Tibial artery (tissue), 4 donors: ENCODE measurements at regions of chr14 and their contacts with region 1.

Region 1: DNA sequence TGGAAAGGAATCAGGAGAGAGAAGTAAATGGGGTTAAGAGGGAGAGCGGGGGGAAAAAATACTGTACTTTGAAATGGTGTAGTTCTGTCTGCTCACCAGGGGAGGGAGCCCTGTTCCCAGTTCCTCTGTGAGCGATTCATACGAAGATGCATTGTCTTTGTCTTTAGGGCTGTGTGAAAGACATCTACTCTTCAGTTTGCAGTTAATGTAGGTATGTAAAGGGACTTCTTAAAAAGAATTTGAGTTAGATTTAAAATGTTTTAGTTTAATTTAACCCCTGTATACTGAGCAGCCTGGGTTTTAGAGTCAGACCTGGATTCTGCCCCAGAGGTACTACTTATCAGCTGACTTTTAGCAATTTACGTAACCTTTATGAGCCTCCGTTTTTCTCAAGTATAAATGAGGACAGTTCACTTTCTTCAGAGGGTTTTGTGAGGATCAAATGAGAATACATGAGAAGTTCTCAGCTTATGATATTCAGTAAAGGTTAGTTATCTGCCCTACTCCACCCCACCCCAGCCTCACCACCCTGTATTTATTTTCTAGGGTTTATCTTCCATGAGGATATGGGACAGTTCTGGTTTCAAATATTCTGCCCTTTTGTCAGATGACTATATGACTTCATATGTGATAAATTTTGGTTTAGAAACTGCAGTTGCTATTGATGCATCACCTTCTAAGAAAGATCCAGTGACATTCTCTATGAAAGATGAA is 82.5 kb upstream of the EVL start:
- DNase-seq: no peak
- H3K4me3 ChIP-seq: no peak overlapping the region
- H3K27ac ChIP-seq: no peak overlapping the region
- H3K4me1 ChIP-seq: no peaks in the 10 kb centered on the region
- H3K27me3 ChIP-seq: no peaks in the 10 kb centered on the region
- CTCF ChIP-seq: peak; percentile 84 to 89

Region 2: GRCh38 chr14:99872786-99873440 is 109.8 kb before region 1 on chr14:
- intact Hi-C with region 1: no loop called
- DNase-seq: no peak
- H3K4me3 ChIP-seq: no peak overlapping the region
- H3K27ac ChIP-seq: no peak overlapping the region
- H3K4me1 ChIP-seq: no peaks in the 10 kb centered on the region
- H3K27me3 ChIP-seq: no peaks in the 10 kb centered on the region
- CTCF ChIP-seq: no peak

Region 3: DNA sequence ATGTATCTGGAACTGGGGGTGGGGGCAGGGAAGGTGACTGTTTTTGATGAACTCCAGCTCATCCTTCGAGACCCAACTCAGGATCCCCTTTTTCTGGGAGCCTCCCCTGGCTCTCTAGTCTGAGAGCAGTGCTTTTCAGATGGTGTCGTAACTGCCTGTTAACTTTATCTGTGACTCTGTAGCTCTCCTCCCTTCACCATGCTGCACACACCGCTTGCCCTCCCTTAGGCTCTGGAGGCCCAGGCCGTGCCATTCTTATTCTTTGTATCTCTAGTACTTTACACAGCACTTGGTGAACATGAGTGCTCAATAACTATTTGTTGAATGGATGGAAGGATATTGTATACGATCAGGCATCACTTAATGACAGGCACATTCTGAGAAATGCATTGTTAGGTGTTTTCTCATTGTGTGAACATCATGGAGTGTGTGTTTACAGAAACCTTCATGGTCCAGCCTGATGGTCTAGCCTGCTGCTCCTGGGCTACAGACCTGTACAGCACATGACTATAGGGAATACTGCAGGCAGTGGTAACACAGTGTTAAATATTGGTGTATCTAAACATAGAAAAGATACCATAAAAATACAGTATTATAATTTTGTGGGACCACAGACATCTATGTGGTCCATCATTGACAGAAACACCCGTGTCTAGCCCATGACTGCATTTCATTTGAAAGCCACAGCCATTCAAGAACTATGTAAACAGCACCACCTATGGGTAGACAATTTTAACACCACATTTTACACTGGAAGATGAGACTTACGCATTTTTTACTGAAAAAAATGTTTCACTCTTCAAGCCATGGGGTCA is 97.7 kb before region 1 on chr14:
- intact Hi-C with region 1: no loop called
- DNase-seq: no peak
- H3K4me3 ChIP-seq: no peak overlapping the region
- H3K27ac ChIP-seq: no peak overlapping the region
- H3K4me1 ChIP-seq: peaks cover 0 to 7% (median 4%) of the 10 kb centered on the region in 4 donors
- H3K27me3 ChIP-seq: no peaks in the 10 kb centered on the region
- CTCF ChIP-seq: peak; percentile 76 to 79

Region 4: DNA sequence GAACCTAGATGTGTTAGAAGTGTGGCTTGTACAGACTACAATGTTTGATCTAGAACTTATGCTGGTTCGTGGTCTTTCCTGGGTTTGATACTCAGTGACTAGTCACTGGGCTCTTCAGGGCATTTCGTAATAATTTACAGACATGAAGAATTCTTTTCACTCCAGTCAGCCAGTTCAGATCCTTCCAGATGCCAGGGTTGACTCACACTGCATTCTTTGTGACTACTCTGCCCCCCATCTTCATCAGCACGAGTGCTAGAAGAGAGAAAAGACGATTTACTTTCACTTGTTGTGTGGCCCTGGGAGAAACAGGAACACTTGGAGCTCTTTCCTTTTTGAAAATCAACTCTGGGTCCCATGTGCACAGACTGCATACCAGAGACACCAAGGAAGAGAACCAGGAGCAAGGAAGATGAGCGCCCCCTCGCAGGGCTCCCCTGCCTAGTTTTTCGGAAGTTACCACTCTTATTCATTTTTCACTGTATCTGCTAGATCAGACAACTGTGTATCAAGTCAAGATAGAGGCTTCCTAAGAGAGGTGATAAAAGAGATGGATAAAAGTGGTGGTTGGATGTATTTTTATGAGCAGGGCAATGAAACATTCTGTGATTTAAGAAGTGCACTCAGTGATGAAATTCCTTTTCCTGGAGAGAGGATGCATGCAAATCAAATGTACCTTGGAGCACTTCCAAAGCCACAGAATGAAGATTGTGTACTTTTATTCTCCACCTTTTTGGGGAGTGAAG is 49.0 kb after region 1 on chr14:
- intact Hi-C with region 1: loop called (anchors 10 kb)
- DNase-seq: peak; percentile 70 to 75
- H3K4me3 ChIP-seq: peak overlapping the region; percentile 40 to 48
- H3K27ac ChIP-seq: peak overlapping the region; percentile 57 to 65
- H3K4me1 ChIP-seq: peaks cover 0 to 49% (median 16%) of the 10 kb centered on the region in 4 donors
- H3K27me3 ChIP-seq: no peaks in the 10 kb centered on the region
- CTCF ChIP-seq: no peak

Region 5: DNA sequence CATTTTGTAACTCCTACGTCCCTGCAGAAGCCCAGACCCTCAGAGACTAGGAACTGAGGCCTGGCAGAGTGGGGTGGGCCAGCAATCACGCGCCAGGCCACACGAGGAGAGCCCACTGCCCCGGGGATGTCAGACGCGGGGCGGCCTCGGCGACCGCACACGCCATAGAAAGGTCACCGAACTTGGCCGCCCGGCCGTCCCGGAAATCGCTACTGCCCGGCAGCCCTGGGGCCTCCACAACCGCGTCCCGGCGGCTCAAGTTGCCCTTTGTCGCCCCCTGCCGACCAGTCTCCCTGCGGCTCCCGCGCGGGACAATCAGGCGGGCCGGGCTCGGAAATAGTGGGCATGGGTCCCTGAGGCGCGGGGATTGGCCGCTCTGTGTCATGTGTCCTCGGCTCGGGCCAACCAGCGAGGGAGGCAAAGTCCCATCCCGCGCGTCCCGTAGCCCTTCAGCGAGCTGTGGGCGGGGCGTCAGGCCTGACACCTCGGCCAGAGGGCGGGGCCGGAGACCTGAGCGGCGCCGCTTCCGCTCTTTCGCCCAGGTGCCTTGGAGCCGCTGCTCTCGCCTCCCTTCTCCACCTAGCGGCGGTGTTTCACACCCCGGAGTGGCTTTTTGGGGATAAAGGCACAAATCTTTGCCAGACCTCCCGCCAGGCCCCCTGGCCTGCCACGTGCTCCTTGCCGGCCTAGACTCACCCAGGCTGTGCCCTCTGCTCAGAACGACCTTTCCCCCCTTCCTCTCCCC is 210.2 kb after region 1 on chr14:
- intact Hi-C with region 1: loop called (anchors 5 kb)
- DNase-seq: peak; percentile 99
- H3K4me3 ChIP-seq: peak overlapping the region; percentile 51 to 57
- H3K27ac ChIP-seq: peak overlapping the region; percentile 87 to 95
- H3K4me1 ChIP-seq: peaks cover 0 to 15% (median 9%) of the 10 kb centered on the region in 4 donors
- H3K27me3 ChIP-seq: no peaks in the 10 kb centered on the region
- CTCF ChIP-seq: peak; percentile 91 to 94